ENCODE measurements at regions of chr20 and their contacts with region 1.

Region 1: DNA sequence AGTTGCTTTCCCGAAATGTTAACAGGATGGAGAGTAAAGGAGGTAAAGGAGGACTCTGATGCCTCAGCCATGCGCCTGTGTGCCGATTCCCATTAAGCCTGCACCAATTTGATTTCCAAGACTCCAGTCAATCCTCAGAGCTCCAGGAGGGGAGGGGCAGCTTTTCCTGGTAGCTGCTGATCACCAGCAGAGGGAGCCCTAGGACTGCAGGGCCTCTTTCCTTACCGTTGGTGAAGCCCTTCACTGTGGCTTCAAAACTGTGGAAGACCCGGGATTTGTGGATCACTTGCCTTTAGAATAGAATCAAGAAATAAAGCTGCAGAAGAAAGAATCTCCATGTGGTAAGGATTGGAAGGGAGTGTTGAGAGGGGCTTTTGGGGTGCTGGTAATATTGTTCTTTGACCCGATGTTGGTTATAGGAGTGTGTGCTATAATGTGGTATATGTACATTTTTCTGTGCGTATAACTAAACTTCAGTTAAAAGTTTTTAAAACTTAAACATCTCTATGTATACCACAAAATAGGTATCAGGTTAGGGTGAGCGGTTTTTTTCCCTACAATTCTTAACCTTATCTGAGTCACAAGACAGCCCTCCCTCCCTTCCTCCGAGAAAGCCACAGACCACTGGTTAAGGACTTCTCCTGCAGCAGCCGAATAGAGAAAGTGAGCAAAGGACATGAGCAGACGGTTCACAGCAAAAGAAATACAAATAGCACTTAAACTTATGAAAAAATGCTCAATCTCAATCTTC is 6.9 kb upstream of the OSER1 start:
- DNase-seq: peak in 8 of 10 donors; percentile 59 to 95 (median 68)

Region 2: GRCh38 chr20:44204155-44204831 is 13.2 kb before region 1 on chr20:
- intact Hi-C with region 1: no loop called
- DNase-seq: no peak

Region 3: DNA sequence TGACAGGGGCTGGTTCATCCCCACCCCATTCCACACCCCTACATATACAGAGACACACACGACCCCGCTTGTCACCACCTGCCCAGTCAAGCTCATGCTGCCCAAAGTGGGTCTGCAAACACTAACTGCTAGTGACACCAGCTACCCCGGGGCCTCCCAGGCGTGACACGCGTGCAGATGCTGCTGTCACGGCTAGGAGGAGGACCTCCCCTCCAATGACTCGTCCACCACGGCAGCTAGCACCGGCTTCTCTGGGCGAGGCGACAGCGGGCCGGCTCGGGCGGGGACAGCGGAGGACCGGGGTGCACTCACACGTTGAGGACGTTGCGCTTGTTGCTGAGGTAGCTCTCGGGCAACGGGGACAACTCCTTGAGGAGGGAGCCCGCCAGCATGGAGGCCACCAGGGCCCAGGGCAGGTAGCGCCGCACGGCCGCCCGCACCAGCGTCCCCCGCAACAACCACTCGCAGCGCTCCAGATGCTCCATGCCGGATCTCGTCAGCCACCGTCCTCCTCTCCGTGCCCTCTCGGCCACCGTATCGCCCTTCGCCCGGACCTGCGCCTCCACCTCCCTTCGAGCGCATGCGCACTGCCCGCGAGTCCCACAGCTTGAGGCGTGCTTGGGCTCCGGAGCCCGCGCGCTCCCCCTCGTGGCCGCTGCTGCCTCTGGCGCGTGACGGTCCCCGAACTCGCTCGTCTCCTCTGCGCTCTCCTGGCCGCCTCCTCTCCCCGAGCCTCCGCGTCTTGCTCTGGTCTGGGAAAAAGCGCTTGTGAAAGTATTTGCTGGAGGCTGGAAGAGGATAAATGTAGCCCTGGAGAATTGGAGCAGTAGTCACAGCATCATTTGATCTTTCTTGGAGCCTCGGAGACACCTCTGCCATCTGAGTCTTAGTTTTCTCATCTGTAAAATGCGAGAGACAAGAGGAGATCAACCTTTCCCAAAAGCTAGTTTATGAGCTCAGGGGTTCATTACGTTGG is 93.4 kb after region 1 on chr20 and contains the start of gene FITM2:
- intact Hi-C with region 1: loop called (anchors 1 kb)
- DNase-seq: peak; percentile 96 to 99 (median 98)

Region 4: GRCh38 chr20:44388466-44389023 is 171.0 kb after region 1 on chr20:
- intact Hi-C with region 1: loop called (anchors 5 kb)
- DNase-seq: peak; percentile 38 to 95 (median 71)

Region 5: DNA sequence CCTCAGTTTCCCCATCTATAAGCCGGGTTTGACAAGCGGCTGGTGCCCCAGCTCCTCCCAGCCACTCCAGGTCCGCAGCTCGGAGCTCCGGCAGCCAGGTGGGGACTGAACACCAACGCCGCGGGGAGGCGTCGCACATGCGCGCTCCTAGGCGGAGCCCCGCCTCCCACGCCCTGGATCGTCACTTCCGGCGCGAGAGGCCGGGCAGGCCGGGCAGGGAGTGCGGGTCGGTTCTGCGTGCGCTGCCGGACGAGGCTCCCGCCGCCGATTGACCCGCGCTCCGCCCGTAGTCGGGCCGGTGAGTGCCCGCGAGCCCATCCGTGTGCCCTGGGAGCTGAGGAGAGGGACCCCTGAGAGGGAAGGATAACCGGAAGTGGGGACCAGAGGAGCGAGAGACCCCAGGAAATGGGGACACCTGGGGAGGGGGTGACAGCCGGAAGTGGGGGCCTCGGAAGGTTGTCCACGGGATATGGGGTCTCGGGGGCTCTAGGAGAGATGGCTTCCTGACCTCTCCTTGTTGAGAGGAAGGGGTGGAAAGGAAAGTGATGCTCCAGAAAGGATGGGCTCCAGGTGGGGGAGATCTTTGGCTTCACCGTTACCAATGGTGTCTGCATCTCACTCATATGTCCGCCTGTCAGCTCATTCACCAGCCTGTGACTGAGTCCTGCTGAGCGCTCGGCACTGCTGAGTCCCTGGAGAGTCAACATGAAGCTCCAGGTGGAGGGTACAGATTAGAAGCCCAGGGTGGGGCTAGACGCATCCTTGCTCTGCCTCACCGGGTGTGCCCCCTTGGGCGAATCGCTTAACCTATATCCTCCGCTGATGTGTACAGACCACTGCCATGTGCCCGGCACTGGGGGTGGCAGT is 258.4 kb after region 1 on chr20 and contains the start of gene TTPAL:
- intact Hi-C with region 1: loop called (anchors 5 kb)
- DNase-seq: peak; percentile 78 to 98 (median 86)